Activated CD4-positive, alpha-beta T cell treated with anti-CD3 and anti-CD28 coated beads, Interleukin-2, amount 10 ng/mL, durations not matched to agents 24 days and 14 days (primary cell): ENCODE measurements at regions of chr7 and their contacts with region 1.

Region 1: DNA sequence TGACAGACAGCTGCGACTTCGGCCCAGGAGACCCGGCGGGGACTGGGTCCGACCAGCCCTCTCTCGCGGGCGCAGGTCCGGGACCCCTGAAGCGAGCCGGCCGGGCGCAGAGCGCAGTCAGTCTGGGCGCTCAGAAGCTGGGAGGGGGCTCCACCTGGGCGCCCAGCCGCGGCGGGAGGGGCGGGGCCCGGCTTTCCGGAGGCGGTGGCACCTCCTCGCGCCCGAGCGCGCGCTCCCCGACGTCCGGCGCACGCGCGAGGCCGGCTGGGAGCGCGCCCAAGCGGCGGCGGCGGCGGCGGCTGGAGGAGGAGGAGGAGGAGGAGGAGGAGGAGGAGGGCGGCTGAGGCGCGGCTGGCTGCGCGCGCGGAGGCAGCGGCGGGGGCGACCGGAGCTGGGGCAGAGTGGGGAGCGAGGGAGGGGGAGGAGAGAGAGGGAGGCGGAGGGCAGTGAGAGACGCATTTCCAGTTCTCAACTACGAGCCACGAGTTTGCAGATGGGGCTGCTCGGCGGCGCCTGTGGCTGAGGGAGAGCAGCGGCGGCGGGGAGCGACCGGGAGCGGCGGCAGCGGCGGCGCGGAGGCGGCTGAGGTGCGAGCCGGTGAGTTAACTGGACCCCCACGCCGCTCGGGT is at the start of gene PALS2:
- DNase-seq: peak; percentile 94
- H3K4me3 Mint-ChIP-seq: peak within 1 kb of the TSS; percentile 99
- H3K27ac Mint-ChIP-seq: peak within 1 kb of the TSS; percentile 89
- H3K4me1 Mint-ChIP-seq: peaks cover 32% of the 10 kb centered on the region
- H3K27me3 Mint-ChIP-seq: peaks cover 47% of the 10 kb centered on the region
- total RNA-seq, gene PALS2: 38.5 and 39.5 TPM in 2 replicates

Region 2: DNA sequence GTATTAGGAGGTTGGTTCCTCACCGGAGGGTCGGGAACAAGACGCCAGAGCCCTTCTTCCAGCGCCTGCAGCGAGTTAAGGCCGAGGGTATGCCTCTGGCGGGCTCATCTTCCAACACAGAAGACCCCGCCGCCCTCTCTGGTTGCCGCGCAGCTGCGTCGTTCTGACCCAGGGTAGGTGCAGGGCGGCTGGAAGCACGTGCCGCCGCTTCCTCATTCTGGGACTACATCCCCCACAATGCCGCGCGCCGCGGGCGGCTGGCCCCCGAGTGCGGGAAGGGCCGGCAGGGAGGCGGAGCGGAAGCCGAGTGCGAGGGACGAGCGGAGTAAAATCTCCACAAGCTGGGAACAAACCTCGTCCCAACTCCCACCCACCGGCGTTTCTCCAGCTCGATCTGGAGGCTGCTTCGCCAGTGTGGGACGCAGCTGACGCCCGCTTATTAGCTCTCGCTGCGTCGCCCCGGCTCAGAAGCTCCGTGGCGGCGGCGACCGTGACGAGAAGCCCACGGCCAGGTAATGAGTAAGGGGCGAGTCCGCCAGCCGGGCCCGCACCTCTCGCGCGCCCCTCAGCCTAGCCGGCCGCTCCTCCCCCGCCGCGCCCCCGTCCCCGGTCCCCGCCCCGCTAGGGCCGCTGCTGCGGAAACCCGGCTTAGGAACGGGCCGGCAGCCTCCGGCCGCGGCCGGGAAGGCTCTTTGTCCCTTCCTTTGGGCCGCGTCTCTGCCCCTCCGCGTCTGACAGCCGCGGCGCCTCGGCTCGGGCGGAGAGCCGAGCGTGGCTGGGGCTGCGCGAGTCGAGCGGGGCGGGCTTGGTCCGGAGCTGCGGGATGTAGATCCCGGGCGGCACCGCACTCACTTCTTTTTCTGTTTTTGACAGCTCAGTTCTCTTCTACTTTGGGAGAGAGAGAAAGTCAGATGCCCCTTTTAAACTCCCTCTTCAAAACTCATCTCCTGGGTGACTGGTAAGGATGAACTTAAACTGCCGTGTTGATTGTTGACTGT is 975.7 kb before region 1 on chr7 and contains the start of gene CCDC126:
- intact Hi-C with region 1: loop called (anchors 10 kb)
- DNase-seq: peak; percentile 95
- H3K4me3 Mint-ChIP-seq: peak within 1 kb of the TSS; percentile 92
- H3K27ac Mint-ChIP-seq: peak within 1 kb of the TSS; percentile 85
- H3K4me1 Mint-ChIP-seq: peaks cover 52% of the 10 kb centered on the region
- H3K27me3 Mint-ChIP-seq: no peaks in the 10 kb centered on the region
- total RNA-seq, gene CCDC126: 6.2 and 8.1 TPM in 2 replicates

Region 3: DNA sequence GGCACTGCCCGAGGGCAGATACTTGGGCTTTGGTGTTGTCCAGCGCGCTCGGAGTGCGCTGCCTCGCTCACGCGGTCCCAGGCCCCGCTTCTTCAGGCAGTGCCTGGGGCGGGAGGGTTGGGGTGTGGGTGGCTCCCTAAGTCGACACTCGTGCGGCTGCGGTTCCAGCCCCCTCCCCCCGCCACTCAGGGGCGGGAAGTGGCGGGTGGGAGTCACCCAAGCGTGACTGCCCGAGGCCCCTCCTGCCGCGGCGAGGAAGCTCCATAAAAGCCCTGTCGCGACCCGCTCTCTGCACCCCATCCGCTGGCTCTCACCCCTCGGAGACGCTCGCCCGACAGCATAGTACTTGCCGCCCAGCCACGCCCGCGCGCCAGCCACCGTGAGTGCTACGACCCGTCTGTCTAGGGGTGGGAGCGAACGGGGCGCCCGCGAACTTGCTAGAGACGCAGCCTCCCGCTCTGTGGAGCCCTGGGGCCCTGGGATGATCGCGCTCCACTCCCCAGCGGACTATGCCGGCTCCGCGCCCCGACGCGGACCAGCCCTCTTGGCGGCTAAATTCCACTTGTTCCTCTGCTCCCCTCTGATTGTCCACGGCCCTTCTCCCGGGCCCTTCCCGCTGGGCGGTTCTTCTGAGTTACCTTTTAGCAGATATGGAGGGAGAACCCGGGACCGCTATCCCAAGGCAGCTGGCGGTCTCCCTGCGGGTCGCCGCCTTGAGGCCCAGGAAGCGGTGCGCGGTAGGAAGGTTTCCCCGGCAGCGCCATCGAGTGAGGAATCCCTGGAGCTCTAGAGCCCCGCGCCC is 289.0 kb before region 1 on chr7 and contains the start of gene NPY:
- intact Hi-C with region 1: loop called (anchors 10 kb)
- DNase-seq: no peak
- H3K4me3 Mint-ChIP-seq: peak within 1 kb of the TSS; percentile 73
- H3K27ac Mint-ChIP-seq: no peak within 1 kb of the TSS
- H3K4me1 Mint-ChIP-seq: peaks cover 3% of the 10 kb centered on the region
- H3K27me3 Mint-ChIP-seq: peaks cover 59% of the 10 kb centered on the region
- total RNA-seq, gene NPY: not detected in 2 replicates

Region 4: DNA sequence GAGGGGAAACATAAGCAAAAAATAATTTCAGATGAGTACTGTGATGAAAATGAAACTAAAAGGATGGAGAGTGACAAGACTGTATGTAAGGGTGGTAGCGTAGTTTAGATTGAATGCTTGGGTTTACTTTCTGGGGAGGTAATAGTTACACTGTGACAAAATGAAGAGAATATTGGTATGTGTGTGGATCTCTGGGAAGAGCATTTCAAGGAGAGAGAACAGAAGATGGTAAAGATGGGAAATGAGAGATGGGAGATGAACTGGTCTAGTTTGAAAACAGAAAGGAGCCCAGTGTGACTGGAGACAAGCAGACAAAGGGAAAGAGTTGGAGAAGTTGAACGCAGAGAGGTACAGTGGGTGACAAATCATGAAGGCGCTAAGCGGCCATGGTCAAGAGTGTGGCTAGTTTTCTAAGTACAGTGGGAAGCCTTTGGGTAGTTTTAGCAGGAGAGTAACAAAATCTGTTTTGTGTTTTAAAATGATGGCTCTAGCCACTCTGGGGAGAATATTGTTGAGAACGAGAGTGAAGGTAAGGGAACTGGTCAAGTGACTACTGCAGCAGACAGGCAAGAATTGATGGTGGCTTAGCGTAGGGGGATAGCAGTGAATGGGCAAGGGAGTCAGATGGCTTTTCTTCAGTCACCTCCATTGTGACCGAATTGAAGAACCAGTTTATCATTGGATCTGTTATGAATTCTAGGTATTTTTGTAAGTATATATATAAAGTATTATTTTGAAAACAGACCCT is 22.7 kb after region 1 on chr7:
- intact Hi-C with region 1: loop called (anchors 1 kb)
- DNase-seq: peak; percentile 62
- H3K4me3 Mint-ChIP-seq: no peak overlapping the region
- H3K27ac Mint-ChIP-seq: no peak overlapping the region
- H3K4me1 Mint-ChIP-seq: peaks cover 3% of the 10 kb centered on the region
- H3K27me3 Mint-ChIP-seq: no peaks in the 10 kb centered on the region

Region 5: DNA sequence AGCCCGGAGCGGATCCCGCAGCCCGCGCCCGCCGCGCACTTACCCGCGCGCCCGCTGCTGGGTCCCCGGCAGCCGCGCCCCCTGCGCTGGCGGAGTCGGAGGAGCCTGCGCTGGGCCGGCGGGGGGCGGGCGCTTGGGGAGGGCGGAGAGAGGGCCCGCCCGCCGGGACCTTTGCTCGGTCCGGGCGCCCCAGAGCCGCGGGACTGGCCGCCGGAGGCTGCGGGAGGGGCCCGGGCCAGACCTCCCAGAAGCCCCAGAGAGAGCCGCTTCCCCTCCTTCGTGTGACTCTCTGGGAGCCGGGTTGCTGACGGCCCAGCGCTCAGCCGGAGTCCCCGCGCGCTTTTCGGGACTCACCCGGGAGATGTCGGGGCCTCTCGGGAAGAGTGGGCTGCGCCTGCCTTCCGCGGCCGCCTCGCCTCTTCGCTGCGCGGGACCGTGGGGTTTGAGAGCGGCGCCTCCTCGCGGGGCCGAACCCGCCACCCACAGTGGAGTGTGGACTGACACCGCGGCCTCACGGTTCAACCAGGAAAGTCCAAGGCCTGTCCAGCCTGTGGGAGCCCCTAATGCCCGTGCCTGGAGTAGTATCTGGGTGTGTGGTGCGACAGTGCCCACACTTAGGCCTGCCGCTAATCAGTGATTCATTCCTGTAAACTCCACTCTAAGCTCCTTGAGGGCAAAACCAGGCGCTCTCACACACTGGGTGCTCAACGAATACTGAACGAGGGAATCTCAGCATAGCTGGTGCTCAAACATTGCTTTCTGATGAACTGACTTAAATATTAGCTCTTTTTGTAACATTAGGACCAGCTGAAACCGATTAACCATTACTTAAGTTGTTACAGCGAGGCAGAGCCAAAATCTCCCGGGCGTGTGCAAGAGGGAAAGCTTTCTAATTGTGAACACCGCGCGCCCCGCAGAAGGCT is 184.5 kb after region 1 on chr7 and contains the start of gene GSDME:
- intact Hi-C with region 1: loop called (anchors 2 kb)
- DNase-seq: peak; percentile 86
- H3K4me3 Mint-ChIP-seq: peak within 1 kb of the TSS; percentile 94
- H3K27ac Mint-ChIP-seq: peak within 1 kb of the TSS; percentile 84
- H3K4me1 Mint-ChIP-seq: peaks cover 32% of the 10 kb centered on the region
- H3K27me3 Mint-ChIP-seq: peaks cover 36% of the 10 kb centered on the region
- total RNA-seq, gene GSDME: 9.6 and 10.4 TPM in 2 replicates

Region 6: GRCh38 chr7:24979863-24980533 is 406.9 kb after region 1 on chr7 and contains the start of gene OSBPL3:
- intact Hi-C with region 1: loop called (anchors 2 kb)
- DNase-seq: peak; percentile 98
- H3K4me3 Mint-ChIP-seq: peak within 1 kb of the TSS; percentile 96
- H3K27ac Mint-ChIP-seq: peak within 1 kb of the TSS; percentile 96
- H3K4me1 Mint-ChIP-seq: peaks cover 53% of the 10 kb centered on the region
- H3K27me3 Mint-ChIP-seq: no peaks in the 10 kb centered on the region
- total RNA-seq, gene OSBPL3: 93.7 and 93.8 TPM in 2 replicates

Region 7: GRCh38 chr7:25125137-25125946 is 552.2 kb after region 1 on chr7 and contains the start of gene CYCS:
- intact Hi-C with region 1: loop called (anchors 10 kb)
- DNase-seq: peak; percentile 100
- H3K4me3 Mint-ChIP-seq: peak within 1 kb of the TSS; percentile 96
- H3K27ac Mint-ChIP-seq: peak within 1 kb of the TSS; percentile 95
- H3K4me1 Mint-ChIP-seq: peaks cover 31% of the 10 kb centered on the region
- H3K27me3 Mint-ChIP-seq: no peaks in the 10 kb centered on the region
- total RNA-seq, gene CYCS: 280 and 290 TPM in 2 replicates